Endothelial cell of umbilical vein (primary cell): ENCODE measurements at regions of chr20 and their contacts with region 1.

Region 1: GRCh38 chr20:63594043-63594561 is 20.1 kb upstream of the HELZ2 start:
- DNase-seq: peak; percentile 33
- H3K4me3 ChIP-seq: no peak overlapping the region
- H3K27ac ChIP-seq: no peak overlapping the region
- H3K4me1 ChIP-seq: no peaks in the 10 kb centered on the region
- H3K27me3 ChIP-seq: no peaks in the 10 kb centered on the region
- CTCF ChIP-seq: no peak
- POLR2A ChIP-seq: no peak

Region 2: DNA sequence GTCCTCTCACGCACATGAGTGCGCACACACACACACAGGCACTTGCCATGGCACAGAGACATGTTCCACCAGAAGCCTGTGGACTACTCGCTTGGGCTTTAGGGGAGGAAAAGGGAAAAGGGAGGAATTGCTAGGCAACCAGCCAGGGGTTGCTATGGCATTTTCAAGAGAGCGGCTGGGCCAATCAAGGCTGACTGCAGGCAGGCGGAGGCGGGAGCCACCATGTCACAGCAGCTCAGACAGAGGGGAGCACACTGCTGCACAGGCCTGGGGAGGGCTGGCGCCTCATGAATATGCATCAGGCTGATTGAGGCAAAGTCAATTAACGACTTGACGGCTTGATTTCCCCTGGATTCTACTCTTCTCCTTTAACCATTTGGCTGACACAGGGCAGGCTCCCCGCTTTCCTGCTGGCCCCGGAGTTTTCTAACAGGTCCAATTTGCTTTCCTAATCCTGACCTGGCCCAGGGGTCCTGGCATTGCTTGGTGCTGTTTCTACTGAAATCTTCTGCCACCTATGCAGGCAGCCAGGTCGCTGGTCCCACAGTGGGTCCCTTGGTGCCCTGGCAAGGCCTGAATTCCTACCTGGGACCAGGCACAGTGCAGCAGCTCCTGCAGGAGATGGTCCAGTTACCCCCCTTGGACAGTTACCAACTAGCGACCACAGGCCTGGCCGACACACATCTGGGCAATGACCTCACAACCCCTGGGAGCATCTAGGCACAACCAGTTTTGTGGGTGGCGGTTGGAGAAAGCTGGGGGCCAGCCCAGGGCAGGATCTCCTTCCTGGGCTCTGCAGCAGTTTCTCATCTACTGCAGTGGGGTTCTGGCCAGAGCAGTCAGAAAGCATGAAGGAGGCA is 430.3 kb before region 1 on chr20:
- CTCF ChIA-PET with region 1: no interaction called
- POLR2A ChIA-PET with region 1: no interaction called
- dilution Hi-C with region 1: no loop called
- intact Hi-C with region 1: loop called (anchors 10 kb)
- DNase-seq: no peak
- H3K4me3 ChIP-seq: no peak overlapping the region
- H3K27ac ChIP-seq: no peak overlapping the region
- H3K4me1 ChIP-seq: no peaks in the 10 kb centered on the region
- H3K27me3 ChIP-seq: no peaks in the 10 kb centered on the region
- CTCF ChIP-seq: no peak
- POLR2A ChIP-seq: no peak